ENCODE measurements at regions of chr1 and their contacts with region 1.

Region 1: GRCh38 chr1:84442256-84442655 is 36.8 kb upstream of the RPF1 start:
- DNase-seq: peak; percentile 76
- H3K4me3 ChIP-seq: no peak overlapping the region
- H3K27me3 ChIP-seq: no peaks in the 10 kb centered on the region
- CTCF ChIP-seq: peak; percentile 52; the same call in 1 of the 2 replicates

Region 2: GRCh38 chr1:84598846-84599741 is 156.8 kb after region 1 on chr1:
- CTCF ChIA-PET with region 1: interaction called, 128 read pairs
- POLR2A ChIA-PET with region 1: no interaction called
- DNase-seq: peak; percentile 63
- H3K4me3 ChIP-seq: no peak overlapping the region
- H3K27me3 ChIP-seq: no peaks in the 10 kb centered on the region
- CTCF ChIP-seq: no peak

Region 3: GRCh38 chr1:84620720-84621313 is 178.6 kb after region 1 on chr1:
- CTCF ChIA-PET with region 1: interaction called, 15 read pairs
- POLR2A ChIA-PET with region 1: no interaction called
- DNase-seq: no peak
- H3K4me3 ChIP-seq: peak overlapping the region; percentile 51
- H3K27me3 ChIP-seq: no peaks in the 10 kb centered on the region
- CTCF ChIP-seq: peak; percentile 70

Region 4: DNA sequence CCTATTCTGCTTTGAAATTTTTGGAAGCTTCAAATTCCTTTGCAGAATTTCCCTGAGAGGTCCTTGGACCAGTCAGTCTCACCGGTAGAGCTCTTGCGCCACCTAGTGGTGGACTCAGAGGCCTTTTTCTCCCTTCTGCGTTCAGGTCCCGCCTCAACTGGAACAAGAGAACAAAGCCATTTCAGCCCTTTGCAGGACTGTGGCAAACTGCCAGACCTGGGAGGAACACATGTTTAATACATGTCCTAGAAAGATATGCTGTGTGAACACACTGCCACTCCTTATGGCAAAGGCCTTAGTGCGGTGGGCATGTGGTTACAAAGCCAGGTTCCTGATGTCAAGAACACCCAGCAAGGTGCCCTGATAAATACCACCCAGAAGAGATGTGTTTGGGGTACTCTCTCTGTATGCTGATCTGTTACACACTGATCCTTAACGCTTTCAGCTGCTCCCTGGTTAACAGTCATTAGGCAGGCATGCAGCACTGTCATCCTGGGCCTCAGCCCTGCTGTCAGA is 330.2 kb after region 1 on chr1:
- CTCF ChIA-PET with region 1: interaction called, 12 read pairs
- POLR2A ChIA-PET with region 1: no interaction called
- DNase-seq: peak; percentile 18
- H3K4me3 ChIP-seq: no peak overlapping the region
- H3K27me3 ChIP-seq: no peaks in the 10 kb centered on the region; the same call in 1 of the 2 replicates
- CTCF ChIP-seq: peak; percentile 93

Measured in BJ (cell line).